ENCODE measurements at regions of chr3 and their contacts with region 1.

Region 1: GRCh38 chr3:149473357-149474249 is 894 bp upstream of the TM4SF4 start:
- DNase-seq: peak; percentile 33 to 76
- ATAC-seq: peak; percentile 98

Region 2: DNA sequence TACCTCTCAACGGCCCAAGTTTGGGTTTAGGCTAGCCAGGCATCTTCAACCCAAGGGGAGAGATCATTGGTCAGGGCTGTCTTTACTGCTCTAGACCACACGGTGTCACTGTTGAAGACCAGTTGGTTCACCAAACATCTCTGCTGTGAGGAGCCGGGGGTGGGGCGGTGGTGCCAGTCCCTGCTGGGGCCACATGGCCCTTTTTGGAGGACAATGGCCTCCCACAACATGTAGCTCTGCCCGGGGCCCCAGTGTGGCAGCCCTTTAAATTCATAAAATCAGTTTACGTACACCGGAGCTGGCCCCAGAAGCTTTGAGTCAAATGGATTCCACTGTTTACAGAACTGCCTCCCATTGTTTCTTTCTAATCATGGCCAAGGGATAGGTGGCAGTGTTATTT is 121.0 kb before region 1 on chr3:
- intact Hi-C with region 1: loop called in 1 of 2 experiments (anchors 10 kb)
- DNase-seq: peak; percentile 45 to 49
- ATAC-seq: peak; percentile 93

Region 3: DNA sequence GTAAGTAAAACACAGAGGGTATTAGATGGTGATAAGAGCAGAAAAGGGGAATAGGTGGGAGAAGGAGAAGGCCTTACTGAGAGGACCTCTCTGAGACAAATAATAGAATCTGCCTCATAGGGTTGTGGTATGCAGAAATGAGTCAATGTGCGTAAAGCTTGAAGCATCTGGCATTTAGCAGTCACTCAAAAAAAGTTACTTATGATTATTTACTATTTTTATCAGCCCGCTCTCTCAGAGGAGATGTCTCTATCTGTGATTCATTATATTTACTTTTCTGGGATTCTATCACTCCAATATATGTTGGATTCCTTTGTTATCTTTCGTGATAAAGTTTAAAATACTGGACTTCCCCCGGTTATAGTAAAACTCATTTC is 91.5 kb before region 1 on chr3:
- intact Hi-C with region 1: loop called in 1 of 2 experiments (anchors 10 kb)
- DNase-seq: no peak
- ATAC-seq: no peak

Region 4: DNA sequence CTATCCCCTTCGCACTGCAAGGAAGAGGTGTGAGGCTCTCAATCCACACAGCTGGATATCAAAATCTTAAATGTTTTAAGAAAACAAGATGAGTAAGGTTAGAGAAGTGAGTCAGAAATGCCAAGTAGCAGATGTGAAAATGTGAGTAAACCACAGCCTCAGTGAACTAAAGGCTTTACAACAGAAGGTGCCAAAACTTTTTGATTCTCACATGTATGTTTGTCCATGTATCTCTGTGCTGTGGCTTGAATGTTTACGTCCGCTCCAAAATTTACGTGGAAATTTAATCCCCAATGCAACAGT is 623.9 kb after region 1 on chr3:
- intact Hi-C with region 1: no loop called
- DNase-seq: no peak
- ATAC-seq: no peak